Naive thymus-derived CD4-positive, alpha-beta T cell (primary cell): ENCODE measurements at regions of chrX and their contacts with region 1.

Region 1: GRCh38 chrX:17736856-17737706 is at the start of gene SCML1:
- DNase-seq: peak; percentile 70 to 91 (median 85)
- ATAC-seq: peak; percentile 88
- H3K4me3 ChIP-seq: peak within 1 kb of the TSS; percentile 73
- H3K4me3 Mint-ChIP-seq: peak within 1 kb of the TSS; percentile 84 to 98 (median 94)
- H3K27ac ChIP-seq: peak within 1 kb of the TSS; percentile 88
- H3K27ac Mint-ChIP-seq: peak within 1 kb of the TSS; percentile 75 to 98 (median 98)
- H3K4me1 ChIP-seq: peaks cover 0 to 5% of the 10 kb centered on the region in 2 donors
- H3K4me1 Mint-ChIP-seq: peaks cover 13 to 37% (median 29%) of the 10 kb centered on the region in 7 donors
- H3K27me3 ChIP-seq: no peaks in the 10 kb centered on the region
- H3K27me3 Mint-ChIP-seq: peaks cover 0 to 42% (median 0%) of the 10 kb centered on the region in 5 donors
- total RNA-seq, gene SCML1: 0.82 to 50.1 (median 28.5) TPM

Region 2: DNA sequence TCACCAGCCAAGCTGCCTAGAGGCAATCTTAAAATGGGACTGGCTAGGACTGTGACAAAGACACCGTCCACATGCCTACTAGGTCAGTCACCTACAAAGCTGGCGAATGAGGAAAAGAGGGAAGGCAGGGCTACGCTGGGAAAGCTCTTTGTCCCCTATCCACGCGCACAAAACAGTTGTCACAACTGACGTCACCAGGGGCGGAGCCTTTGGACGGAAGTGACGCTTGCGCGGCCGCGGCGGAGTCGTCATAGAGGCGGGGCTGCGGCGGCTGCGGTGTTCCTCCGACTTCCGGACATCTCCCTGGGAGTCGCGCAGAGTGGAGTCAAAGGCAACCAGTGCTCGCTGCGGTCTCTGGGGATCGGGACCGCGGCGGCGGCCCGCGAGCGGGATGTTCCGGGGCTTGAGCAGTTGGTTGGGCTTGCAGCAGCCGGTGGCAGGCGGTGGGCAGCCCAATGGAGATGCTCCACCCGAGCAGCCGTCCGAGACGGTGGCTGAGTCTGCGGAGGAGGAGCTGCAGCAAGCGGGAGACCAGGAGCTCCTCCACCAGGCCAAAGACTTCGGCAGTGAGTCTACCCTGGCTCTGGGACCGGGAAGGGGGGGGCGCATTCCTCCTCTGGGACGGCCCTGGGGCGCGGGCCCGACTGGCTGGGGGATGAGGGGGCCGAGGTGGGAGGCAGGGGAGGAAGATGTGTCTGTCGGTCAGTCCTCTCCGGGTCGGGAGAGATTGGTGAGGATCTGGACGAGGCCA is 1017.6 kb before region 1 on chrX and contains the start of gene SYAP1:
- CTCF ChIA-PET with region 1: no interaction called
- POLR2A ChIA-PET with region 1: no interaction called
- intact Hi-C with region 1: loop called (anchors 5 to 10 kb)
- DNase-seq: peak; percentile 85 to 100 (median 96)
- ATAC-seq: peak; percentile 96
- H3K4me3 ChIP-seq: peak within 1 kb of the TSS; percentile 95
- H3K4me3 Mint-ChIP-seq: peak within 1 kb of the TSS; percentile 88 to 98 (median 94)
- H3K27ac ChIP-seq: peak within 1 kb of the TSS; percentile 99
- H3K27ac Mint-ChIP-seq: peak within 1 kb of the TSS; percentile 92 to 100 (median 99)
- H3K4me1 ChIP-seq: peaks cover 0 to 10% of the 10 kb centered on the region in 2 donors
- H3K4me1 Mint-ChIP-seq: peaks cover 2 to 63% (median 39%) of the 10 kb centered on the region in 7 donors
- H3K27me3 ChIP-seq: no peaks in the 10 kb centered on the region
- H3K27me3 Mint-ChIP-seq: no peaks in the 10 kb centered on the region
- total RNA-seq, gene SYAP1: 15.4 to 36.9 (median 15.6) TPM

Region 3: GRCh38 chrX:16870095-16870860 is 866.8 kb before region 1 on chrX and contains the start of gene RBBP7:
- CTCF ChIA-PET with region 1: no interaction called
- POLR2A ChIA-PET with region 1: no interaction called
- intact Hi-C with region 1: loop called (anchors 2 to 10 kb)
- DNase-seq: peak; percentile 88 to 98 (median 94)
- ATAC-seq: peak; percentile 91
- H3K4me3 ChIP-seq: peak within 1 kb of the TSS; percentile 69
- H3K4me3 Mint-ChIP-seq: peak within 1 kb of the TSS; percentile 93 to 99 (median 96)
- H3K27ac ChIP-seq: peak within 1 kb of the TSS; percentile 96
- H3K27ac Mint-ChIP-seq: peak within 1 kb of the TSS; percentile 89 to 98 (median 97)
- H3K4me1 ChIP-seq: peaks cover 0 to 23% of the 10 kb centered on the region in 2 donors
- H3K4me1 Mint-ChIP-seq: peaks cover 7 to 50% (median 39%) of the 10 kb centered on the region in 7 donors
- H3K27me3 ChIP-seq: no peaks in the 10 kb centered on the region
- H3K27me3 Mint-ChIP-seq: peaks cover 0 to 9% (median 0%) of the 10 kb centered on the region in 5 donors
- total RNA-seq, gene RBBP7: 82.9 to 112 (median 94.6) TPM

Region 4: GRCh38 chrX:17769701-17770269 is 32.7 kb after region 1 on chrX:
- CTCF ChIA-PET with region 1: no interaction called
- POLR2A ChIA-PET with region 1: no interaction called
- intact Hi-C with region 1: loop called in 1 of 2 experiments (anchors 5 kb)
- DNase-seq: peak in 2 of 9 donors; percentile 18 to 23
- ATAC-seq: peak; percentile 57
- H3K4me3 ChIP-seq: no peak overlapping the region
- H3K4me3 Mint-ChIP-seq: no peak overlapping the region
- H3K27ac ChIP-seq: no peak overlapping the region
- H3K27ac Mint-ChIP-seq: no peak overlapping the region
- H3K4me1 ChIP-seq: peaks cover 0 to 84% of the 10 kb centered on the region in 2 donors
- H3K4me1 Mint-ChIP-seq: no peaks in the 10 kb centered on the region
- H3K27me3 ChIP-seq: no peaks in the 10 kb centered on the region
- H3K27me3 Mint-ChIP-seq: no peaks in the 10 kb centered on the region

Region 5: DNA sequence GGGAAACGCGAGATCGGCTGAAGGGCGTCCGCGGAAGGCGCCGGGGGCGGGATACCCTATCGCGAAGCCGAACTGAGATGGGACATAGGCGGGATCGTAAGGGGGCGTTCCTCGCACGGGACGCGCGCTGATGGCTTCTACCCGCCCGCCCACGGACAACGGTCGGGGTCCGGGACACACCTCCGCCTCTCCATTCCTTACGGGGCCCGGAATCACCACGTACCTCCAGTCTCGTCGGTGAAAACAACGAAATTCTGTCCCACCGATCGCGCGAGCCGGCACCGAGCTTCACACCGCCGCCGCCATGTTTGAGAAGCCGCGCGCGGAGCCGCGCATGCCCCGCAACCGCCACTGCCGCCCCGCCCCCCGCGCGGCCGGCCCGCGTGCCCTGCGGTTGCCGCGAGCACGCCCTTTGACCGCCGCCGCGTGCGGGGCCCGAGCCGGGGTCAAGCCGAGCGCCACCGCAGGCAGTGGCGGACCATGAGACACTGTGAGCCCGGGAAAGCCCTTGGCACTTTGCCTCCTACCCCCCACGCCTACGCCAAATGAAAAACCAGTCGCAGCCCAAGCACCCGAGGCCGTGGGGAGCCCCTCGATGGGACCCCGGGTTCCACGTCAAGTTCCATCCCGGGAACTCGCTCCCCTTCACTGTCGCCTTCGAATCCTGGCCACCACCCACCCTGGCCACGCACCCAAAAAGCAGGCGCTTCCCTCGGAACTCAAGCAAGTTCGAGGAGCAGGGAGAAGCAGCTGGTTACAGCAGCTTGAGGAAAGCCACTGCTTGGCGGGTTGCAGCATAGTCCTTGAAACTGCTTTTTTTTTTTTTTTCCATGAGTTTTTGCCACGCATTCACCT is 617.5 kb after region 1 on chrX and contains the start of gene SCML2:
- CTCF ChIA-PET with region 1: no interaction called
- POLR2A ChIA-PET with region 1: no interaction called
- intact Hi-C with region 1: loop called in 1 of 2 experiments (anchors 2 kb)
- DNase-seq: peak; percentile 3 to 48 (median 23)
- ATAC-seq: peak; percentile 78
- H3K4me3 ChIP-seq: peak within 1 kb of the TSS; percentile 35
- H3K4me3 Mint-ChIP-seq: peak within 1 kb of the TSS; percentile 71 to 88 (median 82)
- H3K27ac ChIP-seq: no peak within 1 kb of the TSS
- H3K27ac Mint-ChIP-seq: peak within 1 kb of the TSS in 2 of 9 donors; percentile 52 to 59
- H3K4me1 ChIP-seq: peaks cover 0 to 4% of the 10 kb centered on the region in 2 donors
- H3K4me1 Mint-ChIP-seq: peaks cover 0 to 10% (median 5%) of the 10 kb centered on the region in 7 donors
- H3K27me3 ChIP-seq: peaks cover 0 to 5% of the 10 kb centered on the region in 2 donors
- H3K27me3 Mint-ChIP-seq: peaks cover 0 to 48% (median 2%) of the 10 kb centered on the region in 5 donors
- total RNA-seq, gene SCML2: 0.96 to 2.2 (median 1.4) TPM

Region 6: GRCh38 chrX:18984381-18985185 is 1247.5 kb after region 1 on chrX:
- CTCF ChIA-PET with region 1: no interaction called
- POLR2A ChIA-PET with region 1: no interaction called
- intact Hi-C with region 1: loop called (anchors 1 to 2 kb)
- DNase-seq: peak; percentile 72 to 90 (median 85)
- ATAC-seq: peak; percentile 95
- H3K4me3 ChIP-seq: peak overlapping the region; percentile 59
- H3K4me3 Mint-ChIP-seq: peak overlapping the region; percentile 77 to 92 (median 86)
- H3K27ac ChIP-seq: peak overlapping the region; percentile 96
- H3K27ac Mint-ChIP-seq: peak overlapping the region; percentile 86 to 98 (median 95)
- H3K4me1 ChIP-seq: peaks cover 3 to 17% of the 10 kb centered on the region in 2 donors
- H3K4me1 Mint-ChIP-seq: peaks cover 5 to 25% (median 10%) of the 10 kb centered on the region in 7 donors
- H3K27me3 ChIP-seq: no peaks in the 10 kb centered on the region
- H3K27me3 Mint-ChIP-seq: no peaks in the 10 kb centered on the region